ENCODE measurements at regions of chr17 and their contacts with region 1.

Region 1: DNA sequence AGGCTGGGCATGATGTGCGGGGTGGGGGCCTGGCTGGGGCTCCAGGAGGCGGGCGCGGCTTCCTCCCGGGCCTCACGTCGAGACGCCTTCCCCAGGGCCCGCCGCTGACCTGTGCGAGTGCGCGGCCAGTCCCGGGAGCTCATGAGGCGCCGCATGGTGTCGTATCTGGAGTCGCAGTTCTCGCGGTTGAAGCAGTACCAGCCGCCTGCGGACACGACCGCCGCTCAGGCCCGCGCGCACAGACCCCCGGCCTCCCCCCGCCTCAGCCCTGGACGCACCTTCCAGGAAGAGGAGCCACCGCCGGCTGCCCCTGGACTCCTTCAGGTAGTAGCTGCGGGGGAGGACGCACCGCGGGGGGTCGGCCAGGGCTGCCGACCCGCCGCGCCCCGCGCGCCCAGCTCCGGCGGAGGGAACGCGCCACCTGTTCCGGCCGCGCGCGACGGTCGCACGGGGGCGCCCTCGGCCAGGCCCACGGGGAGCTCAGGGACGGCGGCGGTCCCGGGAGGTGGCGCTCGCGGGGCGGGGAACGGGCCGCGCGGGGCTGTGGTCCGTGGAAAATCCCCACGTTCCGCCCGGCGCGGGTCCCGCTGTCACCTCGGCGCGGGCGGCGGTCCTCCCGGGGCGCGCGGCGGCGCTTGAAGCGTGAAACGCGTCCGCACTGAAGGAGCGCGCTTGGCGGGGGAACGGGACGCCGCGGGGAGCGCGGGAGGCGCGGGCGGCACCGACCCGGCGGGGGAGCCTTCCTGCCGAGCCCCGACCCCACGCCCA is 1.4 kb downstream of the NOTUM start:
- DNase-seq: peak; percentile 18
- H3K4me3 ChIP-seq: no peak overlapping the region
- H3K27ac ChIP-seq: no peak overlapping the region
- H3K4me1 ChIP-seq: no peaks in the 10 kb centered on the region
- H3K27me3 ChIP-seq: peaks cover 34 to 47% of the 10 kb centered on the region in 2 experiments
- CTCF ChIP-seq: peak; percentile 60 to 75
- POLR2A ChIP-seq: no peak

Region 2: GRCh38 chr17:81927653-81928543 is 31.6 kb before region 1 on chr17 and contains the start of gene MAFG:
- CTCF ChIA-PET with region 1: interaction called, 24 read pairs
- POLR2A ChIA-PET with region 1: no interaction called
- dilution Hi-C with region 1: no loop called
- intact Hi-C with region 1: no loop called
- DNase-seq: peak; percentile 97
- H3K4me3 ChIP-seq: peak within 1 kb of the TSS; percentile 17 to 64 (median 49)
- H3K27ac ChIP-seq: peak within 1 kb of the TSS; percentile 77
- H3K4me1 ChIP-seq: peaks cover 17% of the 10 kb centered on the region
- H3K27me3 ChIP-seq: no peaks in the 10 kb centered on the region
- CTCF ChIP-seq: peak; percentile 29 to 47
- POLR2A ChIP-seq: peak; percentile 57
- total RNA-seq, gene MAFG: 30.5 and 35.0 TPM in 2 replicates

Region 3: GRCh38 chr17:81977211-81978027 is 17.9 kb after region 1 on chr17 and contains the start of gene ASPSCR1:
- CTCF ChIA-PET with region 1: interaction called, 18 read pairs
- POLR2A ChIA-PET with region 1: no interaction called
- dilution Hi-C with region 1: no loop called
- intact Hi-C with region 1: no loop called
- DNase-seq: peak; percentile 87
- H3K4me3 ChIP-seq: peak within 1 kb of the TSS; percentile 56 to 80 (median 61)
- H3K27ac ChIP-seq: peak within 1 kb of the TSS; percentile 90
- H3K4me1 ChIP-seq: peaks cover 5% of the 10 kb centered on the region
- H3K27me3 ChIP-seq: no peaks in the 10 kb centered on the region
- CTCF ChIP-seq: no peak
- POLR2A ChIP-seq: peak; percentile 92
- total RNA-seq, gene ASPSCR1: 30.9 and 36.5 TPM in 2 replicates

Region 4: GRCh38 chr17:82003411-82004381 is 44.1 kb after region 1 on chr17:
- CTCF ChIA-PET with region 1: interaction called, 15 read pairs
- POLR2A ChIA-PET with region 1: no interaction called
- dilution Hi-C with region 1: no loop called
- intact Hi-C with region 1: no loop called
- DNase-seq: peak; percentile 93
- H3K4me3 ChIP-seq: no peak overlapping the region
- H3K27ac ChIP-seq: peak overlapping the region; percentile 54
- H3K4me1 ChIP-seq: peaks cover 13% of the 10 kb centered on the region
- H3K27me3 ChIP-seq: no peaks in the 10 kb centered on the region
- CTCF ChIP-seq: no peak
- POLR2A ChIP-seq: no peak

Region 5: DNA sequence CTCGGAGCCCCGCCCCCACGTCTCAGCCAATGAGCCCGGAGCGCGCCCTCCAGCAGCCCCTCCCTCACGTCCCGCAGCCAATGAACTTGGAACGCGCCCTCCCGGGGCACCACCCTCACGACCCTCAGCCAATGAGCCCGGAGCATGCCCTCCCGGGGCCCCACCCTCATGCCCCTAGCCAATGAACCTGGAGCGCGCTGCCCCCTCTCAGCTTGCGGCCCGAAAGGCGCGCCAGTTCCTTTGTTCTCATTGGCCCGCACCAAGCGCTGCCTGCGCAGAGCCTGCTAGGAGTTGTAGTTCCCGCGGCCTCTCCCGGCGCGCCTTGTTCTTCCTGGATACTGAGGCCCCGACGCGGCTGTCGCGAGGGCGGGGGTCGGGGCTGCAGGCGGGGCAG is 63.4 kb after region 1 on chr17 and contains the start of gene LRRC45:
- CTCF ChIA-PET with region 1: interaction called, 345 read pairs
- POLR2A ChIA-PET with region 1: no interaction called
- dilution Hi-C with region 1: no loop called
- intact Hi-C with region 1: loop called (anchors 1 kb)
- DNase-seq: peak; percentile 100
- H3K4me3 ChIP-seq: peak within 1 kb of the TSS; percentile 50 to 70 (median 60)
- H3K27ac ChIP-seq: peak within 1 kb of the TSS; percentile 21
- H3K4me1 ChIP-seq: peaks cover 12% of the 10 kb centered on the region
- H3K27me3 ChIP-seq: no peaks in the 10 kb centered on the region
- CTCF ChIP-seq: no peak
- POLR2A ChIP-seq: no peak
- total RNA-seq, gene LRRC45: 18.6 and 22.9 TPM in 2 replicates

Region 6: GRCh38 chr17:82037113-82037888 is 77.8 kb after region 1 on chr17 and contains the start of gene DCXR:
- CTCF ChIA-PET with region 1: interaction called, 19 read pairs
- POLR2A ChIA-PET with region 1: no interaction called
- dilution Hi-C with region 1: no loop called
- intact Hi-C with region 1: no loop called
- DNase-seq: peak; percentile 97
- H3K4me3 ChIP-seq: peak within 1 kb of the TSS; percentile 58 to 71 (median 69)
- H3K27ac ChIP-seq: peak within 1 kb of the TSS; percentile 36
- H3K4me1 ChIP-seq: peaks cover 9% of the 10 kb centered on the region
- H3K27me3 ChIP-seq: no peaks in the 10 kb centered on the region
- CTCF ChIP-seq: peak; percentile 87 to 92
- POLR2A ChIP-seq: peak; percentile 80
- total RNA-seq, gene DCXR: 75.2 and 93.0 TPM in 2 replicates

Region 7: GRCh38 chr17:82230627-82231311 is 271.2 kb after region 1 on chr17:
- CTCF ChIA-PET with region 1: no interaction called
- POLR2A ChIA-PET with region 1: no interaction called
- dilution Hi-C with region 1: no loop called
- intact Hi-C with region 1: no loop called
- DNase-seq: peak; percentile 75
- H3K4me3 ChIP-seq: peak overlapping the region; percentile 53 to 89 (median 71)
- H3K27ac ChIP-seq: peak overlapping the region; percentile 55
- H3K4me1 ChIP-seq: peaks cover 21% of the 10 kb centered on the region
- H3K27me3 ChIP-seq: no peaks in the 10 kb centered on the region
- CTCF ChIP-seq: peak in 1 of 2 donors; percentile 65
- POLR2A ChIP-seq: peak; percentile 44

Measured in endothelial cell of umbilical vein (primary cell).